HAP-1 (cell line): ENCODE measurements at regions of chrX and their contacts with region 1.

Region 1: DNA sequence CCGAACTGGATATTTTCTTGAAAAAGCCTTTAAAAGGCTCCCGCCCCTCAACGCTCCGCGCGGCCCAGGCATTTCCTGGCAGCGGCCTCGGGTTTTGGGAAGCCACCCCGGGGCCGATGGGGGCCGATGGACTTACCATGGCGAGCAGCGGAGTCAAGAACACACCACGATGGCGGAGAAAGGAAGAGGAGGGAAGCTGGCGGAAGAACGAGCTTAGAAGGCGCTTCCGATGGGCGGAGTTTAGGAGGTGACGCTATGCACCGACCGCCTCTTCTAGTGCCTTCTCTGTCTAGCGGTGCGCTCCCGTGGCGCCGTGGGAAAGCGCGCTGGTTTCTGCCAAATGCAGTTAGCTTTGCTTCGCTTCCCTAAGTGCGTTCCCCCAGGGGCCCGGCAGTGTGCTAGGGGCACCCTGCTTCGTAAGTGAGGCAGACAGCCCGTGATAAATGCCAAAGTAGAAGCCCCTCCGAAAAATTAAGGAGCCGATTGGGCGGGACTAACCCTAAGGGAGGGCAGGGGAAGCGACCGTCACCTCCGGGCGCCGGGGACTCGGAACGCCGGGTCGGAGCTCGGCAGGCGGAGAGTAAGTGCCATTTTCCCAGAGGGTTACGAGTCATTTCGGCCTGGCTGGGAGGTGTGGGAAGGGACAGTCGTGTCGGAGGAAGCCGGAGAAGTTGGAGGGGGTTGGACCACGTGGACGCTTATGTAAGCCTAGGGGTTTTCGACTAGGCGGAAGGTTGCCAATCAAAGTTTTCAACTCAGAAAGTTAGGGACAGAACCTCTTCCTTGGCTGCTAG is at the start of gene RPL39:
- DNase-seq: peak; percentile 91 to 95
- H3K4me3 ChIP-seq: peak within 1 kb of the TSS; percentile 96
- H3K4me1 ChIP-seq: peaks cover 28% of the 10 kb centered on the region
- H3K27me3 ChIP-seq: no peaks in the 10 kb centered on the region

Region 2: DNA sequence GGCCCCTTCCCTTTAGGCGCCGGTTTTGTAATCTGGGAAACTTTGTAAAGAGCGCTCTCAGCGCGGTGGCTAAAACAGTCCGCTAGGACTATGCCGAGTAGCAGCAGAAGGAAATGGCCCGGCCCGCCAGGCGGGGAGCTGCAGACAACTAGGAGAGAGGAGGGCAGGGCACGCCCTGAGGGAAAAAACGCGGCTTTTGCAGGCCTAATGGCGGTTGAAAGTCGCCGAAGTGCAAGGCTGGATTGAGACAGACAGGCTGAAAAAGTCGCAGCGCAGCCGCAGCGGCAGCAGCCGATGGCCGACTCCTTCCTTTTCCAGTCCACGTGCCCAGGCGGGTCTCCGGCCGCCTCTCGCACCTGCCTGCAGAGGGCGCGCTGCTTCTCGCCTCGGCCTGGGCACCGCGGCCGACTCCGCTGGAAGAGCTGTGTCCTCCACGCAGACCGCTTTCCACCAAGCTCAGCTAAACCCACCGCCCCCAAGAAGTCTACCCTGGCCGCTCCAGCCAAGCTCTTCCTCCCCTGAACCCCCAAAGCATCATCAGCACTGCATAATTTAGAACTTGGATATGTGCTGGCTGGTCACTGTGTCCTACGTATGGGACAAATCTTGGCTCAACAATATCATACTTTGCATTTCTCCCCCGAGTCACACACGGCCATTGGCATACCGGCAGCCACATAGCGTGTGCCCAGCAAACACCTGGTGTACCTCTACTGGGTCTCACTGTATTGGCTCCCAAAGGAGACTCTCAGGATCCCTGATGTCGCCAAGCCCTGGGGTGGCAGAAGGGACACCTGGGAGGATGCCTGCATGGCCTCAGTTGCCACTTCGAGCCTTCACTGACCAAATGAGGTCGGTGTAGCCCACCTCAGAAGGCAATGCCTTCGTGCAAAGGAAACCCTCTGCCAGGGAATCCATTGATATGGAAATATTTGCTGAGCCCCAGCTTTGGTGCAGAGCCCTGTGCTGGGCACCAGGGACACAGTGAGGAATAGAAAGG is 308.9 kb before region 1 on chrX:
- in situ Hi-C with region 1: no loop called
- DNase-seq: peak; percentile 77 to 88
- H3K4me3 ChIP-seq: peak overlapping the region; percentile 13
- H3K4me1 ChIP-seq: peaks cover 27% of the 10 kb centered on the region
- H3K27me3 ChIP-seq: no peaks in the 10 kb centered on the region

Region 3: DNA sequence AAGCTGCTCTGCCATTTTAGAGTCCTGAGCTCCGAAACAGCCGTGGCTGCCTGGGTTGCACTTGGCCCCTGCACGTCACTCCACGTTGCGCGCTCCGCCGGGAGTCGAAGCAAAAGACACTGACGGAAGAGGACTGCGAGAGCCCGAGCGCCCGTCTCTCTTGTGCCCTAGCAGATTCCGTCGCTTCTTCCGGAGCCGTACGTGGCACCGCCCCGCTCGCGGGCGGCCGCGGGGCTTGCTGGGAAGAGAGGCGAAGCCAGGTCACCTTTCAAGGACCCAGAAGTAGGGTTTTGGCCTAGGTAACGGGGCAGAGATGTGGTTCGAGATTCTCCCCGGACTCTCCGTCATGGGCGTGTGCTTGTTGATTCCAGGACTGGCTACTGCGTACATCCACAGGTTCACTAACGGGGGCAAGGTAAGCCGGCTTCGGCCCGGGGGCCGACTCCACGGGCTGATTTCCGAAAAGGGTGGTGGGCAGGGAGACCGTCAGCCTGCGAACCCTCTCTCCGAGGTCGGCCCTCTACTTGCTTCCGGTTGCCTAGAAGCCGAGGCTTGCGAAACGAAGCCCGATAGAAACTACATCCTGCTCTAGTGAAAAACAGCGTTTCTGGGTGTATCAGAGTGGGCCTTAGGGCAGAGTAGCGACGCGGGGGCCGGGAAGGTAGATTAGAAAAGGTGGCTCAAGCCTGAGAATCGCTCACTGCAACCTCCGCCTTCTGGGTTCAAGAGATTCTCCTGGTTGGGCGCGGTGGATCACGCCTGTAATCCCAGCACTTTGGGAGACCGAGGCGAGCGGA is 80.2 kb after region 1 on chrX and contains the starts of genes NDUFA1 and RNF113A:
- in situ Hi-C with region 1: loop called (anchors 5 kb)
- DNase-seq: peak; percentile 93
- H3K4me3 ChIP-seq: peak within 1 kb of the TSS; percentile 61
- H3K4me1 ChIP-seq: peaks cover 11% of the 10 kb centered on the region
- H3K27me3 ChIP-seq: no peaks in the 10 kb centered on the region

Region 4: DNA sequence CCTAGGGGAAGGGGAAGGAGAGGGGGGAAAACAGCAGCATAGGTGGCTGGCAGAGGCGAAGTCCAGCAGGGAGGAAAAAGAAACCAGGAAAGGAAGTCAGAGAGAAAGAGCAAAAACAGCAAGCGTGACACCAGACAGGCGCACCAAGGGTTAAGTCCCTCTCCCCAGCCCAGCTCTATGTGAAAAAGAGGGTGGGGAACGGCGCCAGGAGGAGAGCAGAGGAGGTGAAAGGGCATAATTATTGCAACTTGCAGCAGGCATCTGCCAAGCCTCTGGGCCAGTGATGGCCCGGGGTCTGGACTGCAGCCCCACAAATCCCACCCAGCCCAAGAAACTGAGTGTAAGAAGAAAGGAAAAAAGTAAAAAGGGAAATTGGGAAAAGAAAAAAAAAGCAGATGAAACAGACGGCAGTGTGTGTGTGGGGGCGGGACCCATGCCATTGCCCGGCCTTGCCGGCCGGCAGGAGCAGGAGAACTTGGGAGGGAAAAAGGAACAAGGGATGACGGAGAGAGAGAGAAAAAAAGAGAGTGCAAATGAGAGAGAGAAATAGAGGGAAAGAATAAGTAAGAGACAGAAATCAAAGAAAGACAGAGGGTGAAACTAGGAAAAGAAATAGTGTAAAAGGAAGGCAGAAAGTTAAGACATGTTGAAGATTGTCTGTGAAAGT is 352.7 kb after region 1 on chrX:
- in situ Hi-C with region 1: loop called (anchors 25 kb)
- DNase-seq: peak; percentile 16 to 74
- H3K4me3 ChIP-seq: no peak overlapping the region
- H3K4me1 ChIP-seq: peaks cover 14% of the 10 kb centered on the region
- H3K27me3 ChIP-seq: no peaks in the 10 kb centered on the region

Region 5: GRCh38 chrX:120402369-120402768 is 610.7 kb after region 1 on chrX:
- in situ Hi-C with region 1: no loop called
- DNase-seq: no peak
- H3K4me3 ChIP-seq: no peak overlapping the region
- H3K4me1 ChIP-seq: no peaks in the 10 kb centered on the region; the same call in 1 of the 2 replicates
- H3K27me3 ChIP-seq: no peaks in the 10 kb centered on the region